ENCODE measurements at regions of chr10 and their contacts with region 1.

Region 1: DNA sequence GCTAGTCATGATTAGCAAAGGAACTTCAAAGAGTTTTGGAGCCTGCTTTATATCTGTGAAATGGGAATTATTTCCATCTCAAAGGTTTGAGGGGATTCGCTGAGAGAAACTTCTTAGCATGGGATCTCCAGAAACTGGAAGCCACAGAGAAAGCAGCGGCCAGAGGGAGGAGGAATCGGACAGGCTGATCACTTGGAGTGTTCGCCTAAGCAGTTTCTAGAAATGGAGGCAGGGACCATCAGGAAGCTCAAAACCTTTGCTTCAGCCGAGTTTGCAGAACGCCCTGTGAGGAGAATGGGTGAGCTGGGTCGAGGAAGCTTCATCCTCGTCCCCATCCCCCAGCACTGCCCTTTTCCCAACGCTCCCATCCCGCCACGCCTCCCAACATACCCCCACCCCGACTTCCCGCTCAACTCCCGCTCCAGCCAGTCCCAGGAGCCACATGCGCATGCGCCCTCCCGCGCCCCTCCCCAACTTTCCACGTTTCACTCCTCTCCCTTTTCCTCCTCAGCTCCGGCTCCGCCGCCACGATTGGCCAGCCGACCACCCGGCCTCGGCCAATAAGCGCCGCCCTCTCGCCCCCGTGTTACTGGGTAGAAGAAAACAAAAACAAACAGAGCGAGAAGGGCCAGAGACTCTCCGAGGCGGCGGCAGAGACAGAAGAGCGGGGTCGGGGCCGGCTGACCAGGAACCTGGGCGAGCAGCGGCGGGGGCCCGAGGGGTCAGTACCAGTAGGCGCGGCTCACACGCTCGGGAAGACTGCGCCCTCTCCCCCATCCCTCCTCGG is at the start of gene PDCD4:
- DNase-seq: peak; percentile 88 to 95
- ATAC-seq: peak; percentile 74 to 85 (median 77)
- H3K4me3 ChIP-seq: peak within 1 kb of the TSS; percentile 95
- H3K4me3 Mint-ChIP-seq: peak within 1 kb of the TSS; percentile 97
- H3K27ac ChIP-seq: peak within 1 kb of the TSS; percentile 97
- H3K27ac Mint-ChIP-seq: peak within 1 kb of the TSS; percentile 96 to 98
- H3K4me1 ChIP-seq: peaks cover 52% of the 10 kb centered on the region
- H3K4me1 Mint-ChIP-seq: peaks cover 59 to 76% of the 10 kb centered on the region in 2 donors
- H3K27me3 ChIP-seq: no peaks in the 10 kb centered on the region
- H3K27me3 Mint-ChIP-seq: no peaks in the 10 kb centered on the region
- CTCF ChIP-seq: no peak
- total RNA-seq, gene PDCD4: 199 to 241 (median 222) TPM

Region 2: GRCh38 chr10:110576220-110576619 is 295.3 kb before region 1 on chr10:
- intact Hi-C with region 1: no loop called
- DNase-seq: no peak
- ATAC-seq: no peak
- H3K4me3 ChIP-seq: no peak overlapping the region
- H3K4me3 Mint-ChIP-seq: no peak overlapping the region
- H3K27ac ChIP-seq: no peak overlapping the region
- H3K27ac Mint-ChIP-seq: no peak overlapping the region
- H3K4me1 ChIP-seq: no peaks in the 10 kb centered on the region
- H3K4me1 Mint-ChIP-seq: peaks cover 21 to 24% of the 10 kb centered on the region in 2 donors
- H3K27me3 ChIP-seq: no peaks in the 10 kb centered on the region
- H3K27me3 Mint-ChIP-seq: no peaks in the 10 kb centered on the region
- CTCF ChIP-seq: no peak

Region 3: GRCh38 chr10:110600487-110601101 is 270.9 kb before region 1 on chr10:
- intact Hi-C with region 1: no loop called
- DNase-seq: peak in 1 of 2 donors; percentile 75
- ATAC-seq: peak in 2 of 3 donors; percentile 42 to 65
- H3K4me3 ChIP-seq: no peak overlapping the region
- H3K4me3 Mint-ChIP-seq: no peak overlapping the region
- H3K27ac ChIP-seq: no peak overlapping the region
- H3K27ac Mint-ChIP-seq: no peak overlapping the region
- H3K4me1 ChIP-seq: no peaks in the 10 kb centered on the region
- H3K4me1 Mint-ChIP-seq: no peaks in the 10 kb centered on the region
- H3K27me3 ChIP-seq: no peaks in the 10 kb centered on the region
- H3K27me3 Mint-ChIP-seq: no peaks in the 10 kb centered on the region
- CTCF ChIP-seq: peak; percentile 56

Region 4: GRCh38 chr10:110850099-110850498 is 21.4 kb before region 1 on chr10:
- intact Hi-C with region 1: loop called (anchors 1 kb)
- DNase-seq: peak in 1 of 2 donors; percentile 67
- ATAC-seq: peak; percentile 86 to 92 (median 87)
- H3K4me3 ChIP-seq: no peak overlapping the region
- H3K4me3 Mint-ChIP-seq: peak overlapping the region; percentile 83
- H3K27ac ChIP-seq: peak overlapping the region; percentile 36
- H3K27ac Mint-ChIP-seq: peak overlapping the region; percentile 85 to 87
- H3K4me1 ChIP-seq: peaks cover 65% of the 10 kb centered on the region
- H3K4me1 Mint-ChIP-seq: peaks cover 63 to 70% of the 10 kb centered on the region in 2 donors
- H3K27me3 ChIP-seq: no peaks in the 10 kb centered on the region
- H3K27me3 Mint-ChIP-seq: peaks cover 5 to 11% of the 10 kb centered on the region in 2 donors
- CTCF ChIP-seq: no peak

Region 5: GRCh38 chr10:110893559-110894179 is 22.2 kb after region 1 on chr10:
- intact Hi-C with region 1: loop called (anchors 2 kb)
- DNase-seq: peak in 1 of 2 donors; percentile 75
- ATAC-seq: peak; percentile 75 to 91 (median 89)
- H3K4me3 ChIP-seq: no peak overlapping the region
- H3K4me3 Mint-ChIP-seq: no peak overlapping the region
- H3K27ac ChIP-seq: no peak overlapping the region
- H3K27ac Mint-ChIP-seq: no peak overlapping the region
- H3K4me1 ChIP-seq: no peaks in the 10 kb centered on the region
- H3K4me1 Mint-ChIP-seq: peaks cover 8 to 21% of the 10 kb centered on the region in 2 donors
- H3K27me3 ChIP-seq: no peaks in the 10 kb centered on the region
- H3K27me3 Mint-ChIP-seq: no peaks in the 10 kb centered on the region
- CTCF ChIP-seq: peak; percentile 69

Region 6: DNA sequence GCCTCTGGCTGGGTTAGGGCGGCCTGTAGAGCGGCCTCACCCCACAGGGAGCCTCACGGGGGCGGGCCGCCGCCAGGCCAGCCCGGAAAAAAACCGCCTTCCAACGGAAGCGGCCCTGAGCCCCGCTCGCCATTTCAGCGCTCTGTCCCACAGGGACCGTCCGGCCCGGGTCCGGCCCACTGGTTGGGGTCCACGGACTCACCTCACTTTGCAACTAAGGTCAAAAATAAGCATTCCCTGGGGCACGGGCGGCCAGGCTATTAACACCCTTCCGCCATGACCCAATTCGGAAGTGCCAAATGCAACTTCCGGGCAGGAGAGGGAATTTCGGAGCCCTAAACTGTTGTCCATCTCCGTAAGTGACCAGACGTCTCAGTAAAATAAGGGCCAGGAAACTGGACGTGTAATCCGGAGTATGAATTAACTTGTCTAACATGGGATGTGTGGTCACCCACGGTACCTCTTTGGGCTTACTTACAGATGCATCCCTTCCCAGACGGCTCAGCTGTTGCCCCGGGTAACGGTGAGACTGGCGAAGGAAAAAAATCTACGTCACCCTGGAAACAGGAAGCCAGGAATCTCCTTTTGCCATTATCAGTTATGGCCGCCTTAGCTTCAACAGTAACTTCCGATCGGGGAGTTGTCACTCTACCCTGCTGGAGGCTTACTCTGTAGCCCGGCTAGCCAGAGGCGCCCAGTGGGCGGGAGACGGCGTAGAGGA is 47.3 kb after region 1 on chr10 and contains the start of gene BBIP1:
- intact Hi-C with region 1: loop called (anchors 1 kb)
- DNase-seq: peak; percentile 81 to 99
- ATAC-seq: peak; percentile 88 to 98 (median 90)
- H3K4me3 ChIP-seq: peak within 1 kb of the TSS; percentile 86
- H3K4me3 Mint-ChIP-seq: peak within 1 kb of the TSS; percentile 97
- H3K27ac ChIP-seq: peak within 1 kb of the TSS; percentile 98
- H3K27ac Mint-ChIP-seq: peak within 1 kb of the TSS; percentile 99 to 100
- H3K4me1 ChIP-seq: peaks cover 7% of the 10 kb centered on the region
- H3K4me1 Mint-ChIP-seq: peaks cover 33 to 46% of the 10 kb centered on the region in 2 donors
- H3K27me3 ChIP-seq: no peaks in the 10 kb centered on the region
- H3K27me3 Mint-ChIP-seq: no peaks in the 10 kb centered on the region
- CTCF ChIP-seq: no peak
- total RNA-seq, gene BBIP1: 27.2 to 58.6 (median 27.7) TPM

Region 7: DNA sequence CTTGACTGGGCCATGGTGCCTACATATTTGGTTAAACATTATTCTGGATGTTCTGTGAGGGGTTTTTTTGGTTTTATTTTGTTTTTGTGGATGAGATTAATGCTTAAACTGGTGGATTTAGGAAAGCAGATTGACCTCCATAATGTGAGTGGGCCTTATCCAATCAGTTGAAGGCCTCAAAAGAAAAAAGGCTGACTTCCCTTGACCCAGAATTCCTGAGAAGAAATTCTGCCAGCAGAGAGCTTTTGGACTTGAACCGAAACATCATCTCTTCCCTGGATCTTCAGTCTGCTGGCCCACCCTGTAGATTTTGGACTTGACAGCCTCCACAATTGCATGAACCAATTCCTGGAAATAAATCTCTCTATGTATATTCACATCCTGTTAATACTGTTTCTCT is 299.7 kb after region 1 on chr10:
- intact Hi-C with region 1: no loop called
- DNase-seq: no peak
- ATAC-seq: no peak
- H3K4me3 ChIP-seq: no peak overlapping the region
- H3K4me3 Mint-ChIP-seq: no peak overlapping the region
- H3K27ac ChIP-seq: no peak overlapping the region
- H3K27ac Mint-ChIP-seq: no peak overlapping the region
- H3K4me1 ChIP-seq: no peaks in the 10 kb centered on the region
- H3K4me1 Mint-ChIP-seq: no peaks in the 10 kb centered on the region
- H3K27me3 ChIP-seq: no peaks in the 10 kb centered on the region
- H3K27me3 Mint-ChIP-seq: peaks cover 3 to 14% of the 10 kb centered on the region in 2 donors
- CTCF ChIP-seq: no peak

Measured in natural killer cell (primary cell).